Activated CD4-positive, alpha-beta memory T cell treated with anti-CD3 and anti-CD28 coated beads for 36 hours (primary cell): ENCODE measurements at regions of chr4 and their contacts with region 1.

Region 1: GRCh38 chr4:145829629-145830395 is 108.8 kb downstream of the ZNF827 start:
- DNase-seq: peak; percentile 73
- H3K4me3 Mint-ChIP-seq: peak overlapping the region; percentile 46
- H3K27ac Mint-ChIP-seq: peak overlapping the region; percentile 71
- H3K4me1 Mint-ChIP-seq: peaks cover 46% of the 10 kb centered on the region
- H3K27me3 Mint-ChIP-seq: no peaks in the 10 kb centered on the region

Region 2: GRCh38 chr4:145487631-145488030 is 342.2 kb before region 1 on chr4:
- CTCF ChIA-PET with region 1: interaction called, 4 read pairs
- POLR2A ChIA-PET with region 1: no interaction called
- intact Hi-C with region 1: loop called (anchors 2 kb)
- DNase-seq: peak; percentile 44
- H3K4me3 Mint-ChIP-seq: no peak overlapping the region
- H3K27ac Mint-ChIP-seq: no peak overlapping the region
- H3K4me1 Mint-ChIP-seq: peaks cover 8% of the 10 kb centered on the region
- H3K27me3 Mint-ChIP-seq: peaks cover 19% of the 10 kb centered on the region

Region 3: GRCh38 chr4:145609481-145610427 is 220.1 kb before region 1 on chr4:
- CTCF ChIA-PET with region 1: no interaction called
- POLR2A ChIA-PET with region 1: no interaction called
- intact Hi-C with region 1: no loop called
- DNase-seq: peak; percentile 80
- H3K4me3 Mint-ChIP-seq: no peak overlapping the region
- H3K27ac Mint-ChIP-seq: no peak overlapping the region
- H3K4me1 Mint-ChIP-seq: peaks cover 11% of the 10 kb centered on the region
- H3K27me3 Mint-ChIP-seq: peaks cover 4% of the 10 kb centered on the region

Region 4: GRCh38 chr4:145732895-145733880 is 96.6 kb before region 1 on chr4:
- CTCF ChIA-PET with region 1: no interaction called
- POLR2A ChIA-PET with region 1: no interaction called
- intact Hi-C with region 1: loop called (anchors 1 kb)
- DNase-seq: peak; percentile 92
- H3K4me3 Mint-ChIP-seq: peak overlapping the region; percentile 69
- H3K27ac Mint-ChIP-seq: peak overlapping the region; percentile 62
- H3K4me1 Mint-ChIP-seq: peaks cover 29% of the 10 kb centered on the region
- H3K27me3 Mint-ChIP-seq: peaks cover 6% of the 10 kb centered on the region

Region 5: GRCh38 chr4:145784036-145784435 is 45.8 kb before region 1 on chr4:
- CTCF ChIA-PET with region 1: no interaction called
- POLR2A ChIA-PET with region 1: no interaction called
- intact Hi-C with region 1: loop called (anchors 1 kb)
- DNase-seq: peak; percentile 64
- H3K4me3 Mint-ChIP-seq: no peak overlapping the region
- H3K27ac Mint-ChIP-seq: peak overlapping the region; percentile 89
- H3K4me1 Mint-ChIP-seq: peaks cover 39% of the 10 kb centered on the region
- H3K27me3 Mint-ChIP-seq: no peaks in the 10 kb centered on the region

Region 6: DNA sequence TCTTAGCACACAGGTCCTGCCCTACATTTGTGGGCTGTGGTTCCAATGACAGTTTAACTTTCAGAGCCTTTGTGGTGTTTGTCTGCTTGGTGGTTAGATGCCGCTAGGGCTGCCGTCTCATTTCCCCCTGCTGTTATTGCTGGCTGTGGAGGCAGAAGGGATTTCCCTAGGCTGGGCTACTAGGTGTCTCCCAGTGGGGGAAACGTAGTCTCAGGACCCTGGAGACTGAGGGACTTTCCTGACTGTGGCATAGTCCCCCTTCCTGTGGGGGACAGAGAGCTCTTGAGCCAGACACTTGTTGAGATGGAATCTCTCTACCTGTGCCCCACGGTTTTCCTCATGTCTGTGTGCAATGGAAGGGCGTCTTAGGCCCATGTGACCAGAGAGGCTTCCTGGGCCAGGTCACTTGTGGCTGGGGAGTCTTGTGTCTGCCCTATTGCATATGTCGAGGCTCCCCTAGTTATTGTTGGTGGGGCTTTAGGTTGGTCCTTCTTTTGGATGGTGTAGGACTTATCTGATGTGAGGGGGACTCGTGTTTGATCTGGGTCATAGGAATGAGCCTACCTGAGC is 1970.3 kb after region 1 on chr4:
- CTCF ChIA-PET with region 1: no interaction called
- POLR2A ChIA-PET with region 1: no interaction called
- intact Hi-C with region 1: loop called (anchors 2 kb)
- DNase-seq: peak; percentile 84
- H3K4me3 Mint-ChIP-seq: no peak overlapping the region
- H3K27ac Mint-ChIP-seq: peak overlapping the region; percentile 29
- H3K4me1 Mint-ChIP-seq: peaks cover 23% of the 10 kb centered on the region
- H3K27me3 Mint-ChIP-seq: no peaks in the 10 kb centered on the region